GM12878 (cell line): ENCODE measurements at regions of chr5 and their contacts with region 1.

Region 1: DNA sequence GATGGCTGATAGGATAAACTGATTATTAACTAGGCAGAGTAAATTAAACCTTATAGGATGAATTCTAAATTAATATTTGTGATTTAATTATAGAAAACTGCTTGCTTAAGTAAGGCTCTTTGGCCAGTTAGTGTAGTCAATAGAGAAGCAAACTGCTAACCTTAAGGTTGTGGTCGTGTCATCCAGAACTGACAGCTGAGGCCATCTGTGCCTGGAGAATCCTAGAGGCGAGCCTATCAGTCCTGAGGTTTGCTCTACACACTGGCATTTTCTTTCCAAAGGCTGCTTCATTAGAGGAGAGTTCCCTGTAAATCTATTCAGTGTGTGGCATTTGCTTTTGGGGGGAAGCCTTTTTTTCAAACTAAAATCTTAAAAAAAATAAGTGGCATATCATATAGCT is 169.2 kb downstream of the MEF2C start:
- DNase-seq: no peak
- ATAC-seq: 0 out of 3 replicates have a peak, but pooled peaks have one; percentile 20
- H3K4me3 ChIP-seq: no peak overlapping the region
- H3K27ac ChIP-seq: no peak overlapping the region
- H3K4me1 ChIP-seq: no peaks in the 10 kb centered on the region
- H3K27me3 ChIP-seq: no peaks in the 10 kb centered on the region
- CTCF ChIP-seq: no peak
- EP300 ChIP-seq: no peak
- POLR2A ChIP-seq: no peak; the same call in 1 of the 2 replicates
- RAD21 ChIP-seq: no peak

Region 2: GRCh38 chr5:88724201-88724600 is 10.4 kb after region 1 on chr5:
- CTCF ChIA-PET with region 1: interaction called, 13 read pairs
- POLR2A ChIA-PET with region 1: no interaction called
- RAD21 ChIA-PET with region 1: interaction called, 7 read pairs
- SMC1A ChIA-PET with region 1: interaction called, 5 read pairs
- in situ Hi-C with region 1: no loop called
- intact Hi-C with region 1: no loop called
- DNase-seq: no peak
- ATAC-seq: peak; percentile 34; the same call in 2 of the 3 replicates
- H3K4me3 ChIP-seq: no peak overlapping the region
- H3K27ac ChIP-seq: no peak overlapping the region
- H3K4me1 ChIP-seq: no peaks in the 10 kb centered on the region
- H3K27me3 ChIP-seq: no peaks in the 10 kb centered on the region
- CTCF ChIP-seq: peak in 1 of 3 experiments; percentile 13; a peak in 2 of 6 replicates
- EP300 ChIP-seq: no peak
- POLR2A ChIP-seq: no peak
- RAD21 ChIP-seq: no peak